ENCODE measurements at regions of chr10 and their contacts with region 1.

Region 1: DNA sequence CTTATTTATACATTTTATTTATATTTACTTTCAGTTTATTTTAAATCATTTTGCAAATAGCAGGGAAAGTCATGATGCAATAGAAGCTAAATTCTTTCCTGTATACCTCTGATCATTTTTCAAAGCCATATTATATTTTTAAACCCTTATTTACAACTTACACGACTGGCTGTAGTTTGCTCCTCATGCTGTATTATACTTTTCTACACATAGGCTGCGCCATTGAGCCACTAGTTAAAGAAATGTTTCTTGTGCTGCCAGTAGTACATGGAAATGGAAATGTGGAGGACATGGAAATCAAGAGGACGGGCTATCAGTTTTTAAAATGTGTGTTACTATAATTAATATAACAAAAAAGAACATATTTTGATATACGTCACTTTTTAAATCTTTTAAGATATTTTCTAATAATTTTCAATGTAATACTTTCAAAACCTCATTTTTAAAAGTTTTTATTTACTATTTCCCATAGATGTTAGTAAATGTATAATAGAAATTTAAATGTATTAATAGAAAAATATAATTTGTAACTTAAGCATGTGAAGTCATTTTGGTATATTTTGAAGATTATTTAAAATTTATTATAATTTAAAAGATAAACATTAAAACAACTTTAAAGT is 118.5 kb downstream of the VTI1A start:
- DNase-seq: peak; percentile 51 to 79
- H3K4me3 ChIP-seq: no peak overlapping the region
- H3K4me3 Mint-ChIP-seq: no peak overlapping the region
- H3K27ac Mint-ChIP-seq: no peak overlapping the region
- H3K4me1 ChIP-seq: no peaks in the 10 kb centered on the region
- H3K4me1 Mint-ChIP-seq: no peaks in the 10 kb centered on the region
- H3K27me3 ChIP-seq: no peaks in the 10 kb centered on the region
- H3K27me3 Mint-ChIP-seq: no peaks in the 10 kb centered on the region
- CTCF ChIP-seq: peak; percentile 67 to 75

Region 2: GRCh38 chr10:112434988-112435619 is 130.4 kb before region 1 on chr10:
- CTCF ChIA-PET with region 1: no interaction called
- POLR2A ChIA-PET with region 1: no interaction called
- intact Hi-C with region 1: no loop called
- DNase-seq: no peak
- H3K4me3 ChIP-seq: no peak overlapping the region
- H3K4me3 Mint-ChIP-seq: no peak overlapping the region
- H3K27ac Mint-ChIP-seq: no peak overlapping the region
- H3K4me1 ChIP-seq: no peaks in the 10 kb centered on the region
- H3K4me1 Mint-ChIP-seq: no peaks in the 10 kb centered on the region
- H3K27me3 ChIP-seq: no peaks in the 10 kb centered on the region
- H3K27me3 Mint-ChIP-seq: no peaks in the 10 kb centered on the region
- CTCF ChIP-seq: peak; percentile 31 to 57

Region 3: GRCh38 chr10:112471878-112472487 is 93.6 kb before region 1 on chr10:
- CTCF ChIA-PET with region 1: no interaction called
- POLR2A ChIA-PET with region 1: no interaction called
- intact Hi-C with region 1: no loop called
- DNase-seq: peak in 1 of 2 experiments; percentile 21
- H3K4me3 ChIP-seq: no peak overlapping the region
- H3K4me3 Mint-ChIP-seq: no peak overlapping the region
- H3K27ac Mint-ChIP-seq: no peak overlapping the region
- H3K4me1 ChIP-seq: peaks cover 8% of the 10 kb centered on the region; the same call in 1 of the 2 replicates
- H3K4me1 Mint-ChIP-seq: no peaks in the 10 kb centered on the region
- H3K27me3 ChIP-seq: no peaks in the 10 kb centered on the region
- H3K27me3 Mint-ChIP-seq: no peaks in the 10 kb centered on the region
- CTCF ChIP-seq: peak; percentile 48 to 68

Region 4: GRCh38 chr10:112687647-112688046 is 122.1 kb after region 1 on chr10:
- CTCF ChIA-PET with region 1: interaction called, 13 read pairs
- POLR2A ChIA-PET with region 1: no interaction called
- intact Hi-C with region 1: no loop called
- DNase-seq: no peak
- H3K4me3 ChIP-seq: no peak overlapping the region
- H3K4me3 Mint-ChIP-seq: no peak overlapping the region
- H3K27ac Mint-ChIP-seq: no peak overlapping the region
- H3K4me1 ChIP-seq: peaks cover 4% of the 10 kb centered on the region; the same call in 1 of the 2 replicates
- H3K4me1 Mint-ChIP-seq: no peaks in the 10 kb centered on the region
- H3K27me3 ChIP-seq: no peaks in the 10 kb centered on the region
- H3K27me3 Mint-ChIP-seq: no peaks in the 10 kb centered on the region
- CTCF ChIP-seq: no peak

Region 5: GRCh38 chr10:112716924-112717413 is 151.4 kb after region 1 on chr10:
- CTCF ChIA-PET with region 1: no interaction called
- POLR2A ChIA-PET with region 1: no interaction called
- intact Hi-C with region 1: loop called (anchors 5 kb)
- DNase-seq: peak in 1 of 2 experiments; percentile 32
- H3K4me3 ChIP-seq: no peak overlapping the region
- H3K4me3 Mint-ChIP-seq: no peak overlapping the region
- H3K27ac Mint-ChIP-seq: no peak overlapping the region
- H3K4me1 ChIP-seq: peaks cover 14% of the 10 kb centered on the region; the same call in 1 of the 2 replicates
- H3K4me1 Mint-ChIP-seq: peaks cover 13% of the 10 kb centered on the region
- H3K27me3 ChIP-seq: no peaks in the 10 kb centered on the region
- H3K27me3 Mint-ChIP-seq: no peaks in the 10 kb centered on the region
- CTCF ChIP-seq: no peak

Region 6: DNA sequence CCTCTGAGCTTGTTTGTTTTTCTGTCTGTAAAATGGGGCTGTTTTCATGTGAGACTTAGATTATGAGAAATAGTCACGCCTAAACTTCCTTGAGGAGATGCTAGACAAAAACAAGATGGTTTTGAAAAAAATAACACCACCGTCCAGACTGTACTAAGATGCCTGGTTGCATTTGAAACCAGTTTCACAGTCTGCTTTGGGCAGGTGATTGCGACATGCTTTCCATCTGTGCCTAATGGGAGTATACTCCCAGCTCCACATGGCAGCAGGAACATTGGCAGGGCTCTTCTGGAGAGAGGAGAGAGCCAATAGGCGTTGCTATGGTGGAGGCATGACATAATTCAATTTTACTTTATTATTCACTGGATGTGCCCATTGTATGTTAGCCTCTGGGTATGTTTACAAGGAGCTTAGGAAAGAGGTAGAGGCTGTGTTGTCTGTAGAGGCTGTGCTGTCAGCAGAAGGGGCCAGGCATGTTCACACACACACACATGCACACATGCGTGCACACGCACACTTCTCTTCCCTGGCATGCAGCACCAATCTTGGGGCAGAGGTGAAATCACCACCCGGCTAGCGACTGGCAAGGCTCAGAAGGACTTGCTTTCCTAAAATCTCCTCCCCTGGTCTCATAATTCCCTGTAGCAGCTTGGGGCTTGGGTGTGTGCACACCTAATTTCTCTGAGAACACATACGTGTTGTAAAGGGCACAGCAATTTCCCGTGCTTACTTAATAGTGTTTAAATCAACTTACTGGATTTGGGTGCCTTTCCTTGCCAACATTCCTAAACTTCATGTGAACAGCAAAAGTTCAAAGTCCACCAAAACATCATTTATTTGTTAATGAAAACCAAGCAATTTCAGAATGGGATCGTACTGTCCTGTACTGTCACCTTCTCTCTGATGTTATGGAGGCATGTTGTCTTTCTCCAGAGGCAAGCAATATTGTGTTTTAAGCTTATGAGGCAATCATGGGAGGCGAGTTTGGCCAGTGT is 546.6 kb after region 1 on chr10:
- CTCF ChIA-PET with region 1: no interaction called
- POLR2A ChIA-PET with region 1: no interaction called
- intact Hi-C with region 1: loop called (anchors 10 kb)
- DNase-seq: no peak
- H3K4me3 ChIP-seq: no peak overlapping the region
- H3K4me3 Mint-ChIP-seq: no peak overlapping the region
- H3K27ac Mint-ChIP-seq: no peak overlapping the region
- H3K4me1 ChIP-seq: peaks cover 6% of the 10 kb centered on the region; the same call in 1 of the 2 replicates
- H3K4me1 Mint-ChIP-seq: peaks cover 2% of the 10 kb centered on the region
- H3K27me3 ChIP-seq: no peaks in the 10 kb centered on the region
- H3K27me3 Mint-ChIP-seq: no peaks in the 10 kb centered on the region
- CTCF ChIP-seq: no peak

Region 7: GRCh38 chr10:113216102-113216501 is 650.6 kb after region 1 on chr10:
- CTCF ChIA-PET with region 1: no interaction called
- POLR2A ChIA-PET with region 1: no interaction called
- intact Hi-C with region 1: loop called (anchors 10 kb)
- DNase-seq: peak in 1 of 2 experiments; percentile 31
- H3K4me3 ChIP-seq: no peak overlapping the region
- H3K4me3 Mint-ChIP-seq: no peak overlapping the region
- H3K27ac Mint-ChIP-seq: no peak overlapping the region
- H3K4me1 ChIP-seq: 0 out of 2 replicates have a peak, but pooled peaks cover 3% of the 10 kb centered on the region
- H3K4me1 Mint-ChIP-seq: peaks cover 7% of the 10 kb centered on the region
- H3K27me3 ChIP-seq: no peaks in the 10 kb centered on the region
- H3K27me3 Mint-ChIP-seq: peaks cover 3% of the 10 kb centered on the region
- CTCF ChIP-seq: peak; percentile 41 to 42

Region 8: DNA sequence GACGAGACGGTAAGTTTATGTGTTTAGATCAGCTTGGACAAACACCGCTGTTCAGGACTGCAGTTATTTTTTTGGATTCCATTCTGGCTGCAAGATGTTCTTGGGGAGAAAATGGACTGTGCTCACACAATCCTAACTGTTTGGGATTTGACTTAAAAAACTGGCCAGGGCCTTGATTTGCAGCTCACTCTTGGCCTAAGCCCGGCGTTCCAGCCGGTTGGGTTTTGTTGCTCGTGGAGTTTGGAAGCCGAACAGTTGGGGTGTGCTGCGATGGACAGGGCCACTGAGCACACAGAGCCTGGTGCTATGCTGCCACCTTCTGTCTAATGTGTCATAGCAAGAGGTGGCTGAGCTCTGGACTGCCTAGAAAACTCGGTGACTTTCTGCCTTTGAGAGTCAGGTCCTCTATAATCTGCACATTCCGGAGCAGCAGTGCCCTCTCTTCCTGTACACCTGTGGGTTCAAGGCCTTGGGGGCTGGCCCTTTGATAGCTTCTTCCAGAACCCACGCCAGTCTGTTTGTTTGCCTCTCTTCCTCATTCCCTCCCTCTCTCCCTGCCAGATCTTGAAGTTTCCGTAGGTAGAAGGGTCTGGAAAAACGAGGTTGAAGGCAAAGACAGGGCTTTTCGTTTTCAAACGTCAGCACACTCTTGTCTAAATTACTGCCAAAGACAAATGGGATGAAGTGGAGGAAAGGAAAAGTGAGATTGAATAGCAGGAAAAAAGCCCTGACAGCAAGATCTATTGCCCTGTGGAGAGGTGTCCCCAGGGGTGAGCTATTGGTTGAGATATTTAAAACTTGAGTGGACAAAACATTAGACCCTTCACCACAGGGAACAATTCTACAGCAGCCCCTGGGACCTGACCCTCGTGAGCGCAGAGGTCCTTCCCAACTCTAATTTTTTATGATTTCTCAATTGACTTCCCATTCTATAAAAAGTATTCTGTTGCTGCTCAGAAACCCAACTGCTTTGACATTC is 819.8 kb after region 1 on chr10:
- CTCF ChIA-PET with region 1: no interaction called
- POLR2A ChIA-PET with region 1: no interaction called
- intact Hi-C with region 1: loop called (anchors 1 kb)
- DNase-seq: peak; percentile 80
- H3K4me3 ChIP-seq: no peak overlapping the region
- H3K4me3 Mint-ChIP-seq: no peak overlapping the region
- H3K27ac Mint-ChIP-seq: no peak overlapping the region
- H3K4me1 ChIP-seq: no peaks in the 10 kb centered on the region
- H3K4me1 Mint-ChIP-seq: peaks cover 6% of the 10 kb centered on the region
- H3K27me3 ChIP-seq: no peaks in the 10 kb centered on the region
- H3K27me3 Mint-ChIP-seq: peaks cover 3% of the 10 kb centered on the region
- CTCF ChIP-seq: peak; percentile 84 to 93